Activated CD8-positive, alpha-beta T cell treated with anti-CD3 and anti-CD28 coated beads for 36 hours (primary cell): ENCODE measurements at regions of chr20 and their contacts with region 1.

Region 1: GRCh38 chr20:38057351-38057972 is 23.9 kb downstream of the RPRD1B start:
- DNase-seq: peak; percentile 91
- ATAC-seq: peak; percentile 91
- H3K4me3 Mint-ChIP-seq: no peak overlapping the region
- H3K27ac Mint-ChIP-seq: peak overlapping the region; percentile 84
- H3K4me1 Mint-ChIP-seq: peaks cover 29% of the 10 kb centered on the region
- H3K27me3 Mint-ChIP-seq: no peaks in the 10 kb centered on the region
- CTCF ChIP-seq: peak; percentile 95

Region 2: DNA sequence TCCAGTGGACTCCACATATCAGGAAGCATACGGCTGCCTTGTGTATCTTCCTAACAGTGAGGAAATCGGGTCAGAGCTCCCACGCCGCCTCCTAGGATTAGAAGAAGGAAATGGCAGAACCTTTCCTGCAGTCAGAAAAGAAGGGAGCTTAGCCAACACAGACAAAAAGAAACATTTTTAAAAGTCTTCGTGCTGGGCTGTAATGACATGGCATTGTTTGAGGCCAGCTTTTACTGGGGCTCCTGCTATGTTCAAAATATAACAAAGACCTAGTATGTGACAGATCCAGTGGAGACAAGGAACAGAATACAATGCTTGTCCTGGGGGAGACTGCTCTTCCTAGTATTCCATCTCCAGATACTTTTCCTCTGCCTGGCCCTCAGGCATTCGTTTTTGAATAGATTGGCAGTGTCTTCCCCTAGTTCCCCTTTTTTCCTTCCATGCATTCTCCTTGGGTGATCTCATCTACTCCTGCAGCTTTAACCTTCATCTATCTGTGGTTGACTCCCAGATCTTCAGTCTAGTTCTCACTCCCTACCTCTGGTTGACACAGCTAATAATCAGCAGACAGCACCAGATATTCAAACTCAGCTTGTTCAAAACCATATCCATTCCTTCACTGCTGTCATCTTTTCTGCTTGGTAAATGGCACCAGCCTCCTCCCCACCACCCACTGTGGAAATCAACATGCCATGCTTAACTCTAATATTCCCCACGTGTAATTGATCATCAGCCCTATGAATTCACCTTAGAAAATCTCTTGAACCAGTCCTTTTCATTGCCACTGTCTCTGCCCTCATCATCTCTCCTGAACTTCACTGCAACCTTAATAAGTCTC is 249.0 kb before region 1 on chr20:
- CTCF ChIA-PET with region 1: no interaction called
- POLR2A ChIA-PET with region 1: no interaction called
- intact Hi-C with region 1: no loop called
- DNase-seq: no peak
- ATAC-seq: no peak
- H3K4me3 Mint-ChIP-seq: no peak overlapping the region
- H3K27ac Mint-ChIP-seq: no peak overlapping the region
- H3K4me1 Mint-ChIP-seq: no peaks in the 10 kb centered on the region
- H3K27me3 Mint-ChIP-seq: no peaks in the 10 kb centered on the region
- CTCF ChIP-seq: no peak

Region 3: GRCh38 chr20:37956084-37956483 is 101.4 kb before region 1 on chr20:
- CTCF ChIA-PET with region 1: no interaction called
- POLR2A ChIA-PET with region 1: no interaction called
- intact Hi-C with region 1: no loop called
- DNase-seq: no peak
- ATAC-seq: no peak
- H3K4me3 Mint-ChIP-seq: no peak overlapping the region
- H3K27ac Mint-ChIP-seq: no peak overlapping the region
- H3K4me1 Mint-ChIP-seq: no peaks in the 10 kb centered on the region
- H3K27me3 Mint-ChIP-seq: peaks cover 2% of the 10 kb centered on the region
- CTCF ChIP-seq: no peak

Region 4: GRCh38 chr20:37968841-37969401 is 88.5 kb before region 1 on chr20:
- CTCF ChIA-PET with region 1: no interaction called
- POLR2A ChIA-PET with region 1: no interaction called
- intact Hi-C with region 1: no loop called
- DNase-seq: no peak
- ATAC-seq: no peak
- H3K4me3 Mint-ChIP-seq: no peak overlapping the region
- H3K27ac Mint-ChIP-seq: no peak overlapping the region
- H3K4me1 Mint-ChIP-seq: no peaks in the 10 kb centered on the region
- H3K27me3 Mint-ChIP-seq: peaks cover under 1% of the 10 kb centered on the region
- CTCF ChIP-seq: no peak

Region 5: GRCh38 chr20:37984018-37984785 is 73.3 kb before region 1 on chr20:
- CTCF ChIA-PET with region 1: no interaction called
- POLR2A ChIA-PET with region 1: no interaction called
- intact Hi-C with region 1: no loop called
- DNase-seq: no peak
- ATAC-seq: no peak
- H3K4me3 Mint-ChIP-seq: no peak overlapping the region
- H3K27ac Mint-ChIP-seq: no peak overlapping the region
- H3K4me1 Mint-ChIP-seq: no peaks in the 10 kb centered on the region
- H3K27me3 Mint-ChIP-seq: no peaks in the 10 kb centered on the region
- CTCF ChIP-seq: no peak

Region 6: DNA sequence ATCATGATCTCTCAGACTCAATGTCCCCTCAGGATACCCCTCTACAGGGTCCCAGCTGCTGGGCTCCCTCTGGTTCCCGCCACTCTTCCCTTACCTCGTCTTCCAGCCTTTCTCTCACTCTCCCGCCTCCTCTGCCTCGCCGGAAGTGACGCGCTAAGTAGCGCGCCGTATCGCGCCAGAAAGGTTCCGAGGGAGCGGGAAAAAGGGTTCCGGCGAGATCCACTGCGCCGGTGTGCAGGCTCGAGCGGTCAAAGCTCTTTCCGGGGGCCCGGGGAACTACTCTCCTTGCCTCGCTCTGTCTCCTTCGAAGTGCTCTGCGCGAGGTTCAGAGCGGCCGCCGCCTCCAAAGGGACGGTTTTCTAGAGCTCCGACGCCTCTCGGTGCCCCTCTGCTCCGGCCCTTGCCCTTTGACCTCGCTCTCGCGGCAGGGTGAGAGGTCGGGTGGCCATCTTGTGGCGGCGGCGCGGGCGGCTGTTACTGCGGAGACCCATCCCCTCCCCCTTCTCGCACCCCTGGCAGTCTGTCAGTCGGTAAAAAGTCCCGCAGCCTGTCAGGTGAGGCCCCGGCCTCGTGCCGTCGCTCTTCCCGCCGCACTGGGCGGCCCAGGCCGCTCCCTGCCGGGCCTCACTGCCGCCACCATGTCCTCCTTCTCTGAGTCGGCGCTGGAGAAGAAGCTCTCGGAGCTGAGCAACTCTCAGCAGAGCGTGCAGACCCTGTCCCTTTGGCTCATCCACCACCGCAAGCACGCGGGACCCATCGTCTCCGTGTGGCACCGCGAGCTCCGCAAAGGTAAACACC is 24.0 kb before region 1 on chr20 and contains the starts of genes RPRD1B and TTI1:
- CTCF ChIA-PET with region 1: interaction called, 14 read pairs
- POLR2A ChIA-PET with region 1: interaction called, 13 read pairs
- intact Hi-C with region 1: no loop called
- DNase-seq: peak; percentile 91
- ATAC-seq: peak; percentile 89
- H3K4me3 Mint-ChIP-seq: peak within 1 kb of the TSS; percentile 88
- H3K27ac Mint-ChIP-seq: peak within 1 kb of the TSS; percentile 99
- H3K4me1 Mint-ChIP-seq: peaks cover 60% of the 10 kb centered on the region
- H3K27me3 Mint-ChIP-seq: no peaks in the 10 kb centered on the region
- CTCF ChIP-seq: no peak
- total RNA-seq, gene RPRD1B: 29.1 to 29.3 TPM
- total RNA-seq, gene TTI1: 34.1 to 39.7 TPM

Region 7: GRCh38 chr20:38043512-38044300 is 13.8 kb before region 1 on chr20:
- CTCF ChIA-PET with region 1: interaction called, 17 read pairs
- POLR2A ChIA-PET with region 1: interaction called, 6 read pairs
- intact Hi-C with region 1: no loop called
- DNase-seq: peak; percentile 35
- ATAC-seq: peak; percentile 79
- H3K4me3 Mint-ChIP-seq: no peak overlapping the region
- H3K27ac Mint-ChIP-seq: peak overlapping the region; percentile 67
- H3K4me1 Mint-ChIP-seq: peaks cover 46% of the 10 kb centered on the region
- H3K27me3 Mint-ChIP-seq: no peaks in the 10 kb centered on the region
- CTCF ChIP-seq: no peak

Region 8: DNA sequence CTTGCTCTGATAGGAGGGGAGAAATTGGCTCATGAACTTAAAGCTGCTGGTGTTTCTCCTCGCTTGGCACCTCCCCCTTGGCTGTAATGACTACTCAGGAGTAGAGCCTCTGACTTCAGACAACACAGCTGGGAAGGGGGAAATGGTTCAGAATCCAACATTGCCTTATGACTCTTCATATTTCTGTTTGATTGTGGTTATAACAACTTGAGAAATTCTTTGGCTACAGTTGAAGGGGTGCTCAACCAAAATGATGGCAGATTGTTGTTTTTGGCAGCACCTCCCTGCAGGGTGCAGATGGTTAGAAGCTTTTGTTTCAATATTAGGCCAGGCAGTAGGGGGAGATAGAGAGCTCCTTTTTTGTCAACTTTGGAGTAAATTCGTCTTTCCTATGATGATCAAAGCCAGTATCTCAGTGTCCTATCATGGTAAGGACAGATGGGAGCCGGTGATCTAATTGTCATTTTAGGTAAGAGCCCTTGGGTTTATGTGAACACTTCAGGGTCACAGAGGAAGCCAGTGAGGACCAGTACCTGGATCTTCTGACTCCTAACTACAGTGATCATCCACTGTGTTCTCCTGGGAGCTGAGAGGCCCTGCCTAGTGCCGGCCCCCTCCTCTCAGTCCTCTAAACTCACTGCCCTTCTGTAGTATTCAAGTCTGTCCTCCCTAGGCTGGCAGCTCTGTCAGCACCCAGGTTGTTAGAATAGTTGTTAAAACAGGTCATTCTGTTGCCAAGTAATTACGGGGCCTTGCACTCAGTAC is 16.0 kb after region 1 on chr20:
- CTCF ChIA-PET with region 1: interaction called, 22 read pairs
- POLR2A ChIA-PET with region 1: no interaction called
- intact Hi-C with region 1: no loop called
- DNase-seq: peak; percentile 25
- ATAC-seq: peak; percentile 77
- H3K4me3 Mint-ChIP-seq: no peak overlapping the region
- H3K27ac Mint-ChIP-seq: no peak overlapping the region
- H3K4me1 Mint-ChIP-seq: peaks cover 9% of the 10 kb centered on the region
- H3K27me3 Mint-ChIP-seq: no peaks in the 10 kb centered on the region
- CTCF ChIP-seq: peak; percentile 76

Region 9: DNA sequence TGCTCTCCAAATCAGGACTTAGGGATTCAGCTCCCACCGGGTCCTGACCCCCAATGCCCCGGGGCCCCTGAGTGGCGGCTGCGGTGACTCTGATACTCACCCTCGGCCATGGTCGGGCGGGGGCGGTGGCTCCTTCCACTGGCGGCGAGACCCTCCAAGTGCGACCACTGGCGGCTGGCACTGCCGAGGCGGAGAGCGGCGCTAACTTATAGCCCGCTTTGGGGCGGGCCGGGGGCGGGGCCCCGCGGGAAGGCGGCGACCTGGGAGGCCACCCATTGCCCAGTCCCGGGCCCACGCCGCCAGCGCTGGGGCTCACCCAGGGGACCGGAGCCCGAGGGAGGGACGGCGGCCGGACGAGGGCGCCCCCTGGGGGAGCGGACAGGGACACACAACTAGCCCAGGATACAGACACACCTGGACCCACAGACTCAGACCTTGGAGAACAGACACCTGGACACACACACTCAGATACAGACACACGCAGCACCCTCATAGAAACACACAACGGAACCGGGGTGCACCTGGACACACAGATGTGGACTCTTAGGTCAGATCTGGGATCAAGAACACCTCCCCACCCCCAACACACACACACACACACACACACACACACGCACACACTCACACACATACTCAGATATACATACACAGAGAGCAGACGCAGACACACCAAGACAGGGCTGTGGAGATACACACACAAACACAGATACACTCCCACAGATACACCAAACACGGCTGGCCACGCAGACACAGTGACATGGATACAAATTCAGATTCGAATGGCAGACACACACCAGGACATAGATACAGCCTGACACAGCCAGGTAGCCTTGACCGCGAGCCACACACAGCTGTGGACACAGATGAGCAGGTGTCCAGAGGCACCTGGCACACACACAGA is 107.9 kb after region 1 on chr20 and contains the start of gene TGM2:
- CTCF ChIA-PET with region 1: interaction called, 8 read pairs
- POLR2A ChIA-PET with region 1: no interaction called
- intact Hi-C with region 1: loop called (anchors 5 kb)
- DNase-seq: peak; percentile 58
- ATAC-seq: peak; percentile 81
- H3K4me3 Mint-ChIP-seq: no peak within 1 kb of the TSS
- H3K27ac Mint-ChIP-seq: no peak within 1 kb of the TSS
- H3K4me1 Mint-ChIP-seq: peaks cover 7% of the 10 kb centered on the region
- H3K27me3 Mint-ChIP-seq: peaks cover 20% of the 10 kb centered on the region
- CTCF ChIP-seq: peak; percentile 75
- total RNA-seq, gene TGM2: not detected